Activated T-helper 1 cell treated with anti-CD3 and anti-CD28 coated beads, Interleukin-12 subunit alpha, Interleukin-12 subunit beta, Interleukin-2, Interleukin-4 antibody, amounts not matched to agents 30 ng/mL and 10 ng/mL and 1 ng/mL, durations not matched to agents 14 hours and 24 hours and 36 hours (primary cell): ENCODE measurements at regions of chr4 and their contacts with region 1.

Region 1: GRCh38 chr4:1899149-1900086 is 28.2 kb downstream of the NSD2 start:
- DNase-seq: peak; percentile 69
- H3K4me3 Mint-ChIP-seq: no peak overlapping the region
- H3K27ac Mint-ChIP-seq: peak overlapping the region; percentile 87
- H3K4me1 Mint-ChIP-seq: peaks cover 56% of the 10 kb centered on the region
- H3K27me3 Mint-ChIP-seq: no peaks in the 10 kb centered on the region

Region 2: DNA sequence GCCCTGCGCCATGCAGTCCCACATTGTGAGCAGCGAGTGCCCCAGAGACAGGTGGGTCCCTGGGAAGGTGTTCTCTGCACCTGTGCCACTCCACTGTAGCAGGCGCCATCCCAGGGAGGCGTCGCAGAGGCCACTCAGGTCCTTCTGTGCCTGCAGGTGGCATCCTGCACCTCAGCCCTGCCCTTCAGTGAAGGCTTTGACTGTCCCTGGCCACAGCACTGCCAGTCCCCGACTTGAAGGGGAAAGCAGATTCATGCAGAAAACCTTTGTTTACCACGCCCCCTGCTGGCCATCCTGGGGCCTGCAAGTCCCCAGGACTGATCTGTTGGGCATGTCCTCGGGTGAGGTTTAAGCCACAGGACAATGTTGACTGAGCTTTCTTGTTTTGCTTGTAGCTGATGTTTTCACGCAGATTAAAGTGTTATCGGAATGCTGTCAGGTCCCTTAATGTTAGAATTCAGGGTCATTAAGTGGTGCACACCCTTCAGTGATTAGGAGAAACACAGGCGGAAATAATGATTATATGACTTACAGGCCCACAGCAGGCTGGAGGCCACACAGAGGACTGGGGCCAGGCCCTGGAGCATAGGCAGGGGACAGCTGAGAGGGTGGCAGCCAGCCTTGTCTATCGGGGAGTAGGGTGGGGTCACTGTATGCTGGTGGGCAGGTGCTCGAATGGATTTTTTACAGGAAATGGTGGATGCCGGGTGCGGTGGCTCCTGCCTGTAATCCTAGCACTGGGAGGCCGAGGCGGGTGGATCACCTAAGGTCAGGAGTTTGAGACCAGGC is 173.1 kb before region 1 on chr4:
- intact Hi-C with region 1: no loop called
- DNase-seq: peak; percentile 80
- H3K4me3 Mint-ChIP-seq: peak overlapping the region; percentile 10
- H3K27ac Mint-ChIP-seq: peak overlapping the region; percentile 37
- H3K4me1 Mint-ChIP-seq: peaks cover 47% of the 10 kb centered on the region
- H3K27me3 Mint-ChIP-seq: no peaks in the 10 kb centered on the region

Region 3: DNA sequence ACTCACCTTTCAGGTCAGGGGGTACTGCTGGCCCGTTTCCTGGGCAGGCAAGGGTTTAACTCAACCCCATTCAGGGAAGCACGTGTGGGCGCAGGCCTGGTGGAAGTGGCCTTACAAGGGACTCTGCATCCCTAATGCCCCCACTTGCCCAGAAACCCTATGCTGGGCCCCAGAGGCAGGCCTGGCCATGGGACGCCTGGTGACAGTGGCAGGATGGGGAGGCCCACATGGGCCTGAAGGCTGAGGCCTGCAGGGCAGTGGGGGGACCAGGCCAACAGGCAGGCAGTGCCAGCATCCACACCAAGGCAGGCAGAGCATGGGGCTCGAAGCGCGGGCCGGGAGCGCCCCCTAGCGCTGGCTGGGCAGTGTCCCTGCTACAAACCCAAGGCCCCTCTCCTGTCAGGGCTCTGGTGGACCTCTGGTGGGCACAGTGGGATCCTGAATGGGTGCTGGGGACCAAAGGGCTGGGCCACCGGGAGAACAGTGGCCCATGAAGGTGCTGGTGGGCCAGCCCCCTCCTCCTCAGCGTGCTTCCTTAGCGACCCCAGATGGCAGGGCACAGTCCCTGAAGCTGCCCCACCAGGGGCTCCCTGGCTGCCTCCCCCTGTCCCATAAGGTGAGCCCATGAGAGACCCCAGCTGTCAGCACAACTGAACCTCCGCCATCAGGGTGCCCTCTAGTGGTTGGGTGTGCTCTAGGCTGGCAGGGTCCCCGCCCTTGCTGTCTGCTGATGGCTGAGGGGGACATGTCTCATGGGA is 89.5 kb before region 1 on chr4:
- intact Hi-C with region 1: loop called (anchors 1 kb)
- DNase-seq: peak; percentile 57
- H3K4me3 Mint-ChIP-seq: no peak overlapping the region
- H3K27ac Mint-ChIP-seq: no peak overlapping the region
- H3K4me1 Mint-ChIP-seq: no peaks in the 10 kb centered on the region
- H3K27me3 Mint-ChIP-seq: no peaks in the 10 kb centered on the region